ENCODE measurements at regions of chr1 and their contacts with region 1.

Region 1: DNA sequence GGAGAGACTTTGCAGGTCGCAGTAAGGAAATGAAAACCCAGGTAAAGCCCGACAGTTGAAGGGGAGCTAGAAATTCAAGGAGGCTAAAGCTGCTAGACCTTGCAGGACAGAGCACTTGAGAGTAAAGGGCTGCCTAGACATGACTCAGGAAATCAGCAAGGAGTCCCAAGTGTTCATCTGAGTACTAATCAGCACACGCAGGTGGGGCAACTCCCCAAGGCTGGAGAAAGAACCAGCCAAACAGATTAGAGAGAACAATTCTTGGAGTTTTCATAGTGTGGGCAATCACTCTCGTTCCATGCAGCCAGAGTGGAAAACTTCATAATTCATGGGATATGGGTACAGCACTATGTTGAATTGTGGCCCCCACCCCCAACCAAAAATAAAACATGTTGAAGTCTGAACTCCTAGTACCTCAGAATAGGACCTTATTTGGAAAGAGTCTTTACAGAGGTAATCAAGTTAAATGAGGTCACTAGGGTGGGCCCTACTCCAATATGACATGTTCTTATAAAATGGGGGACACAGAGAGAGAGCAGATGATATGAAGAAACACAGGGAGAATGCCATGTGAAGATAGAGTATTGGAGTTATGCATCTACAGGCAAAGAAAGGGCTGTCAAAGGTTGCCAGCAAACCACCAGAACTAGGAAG is 28.0 kb downstream of the SYDE2 start:
- DNase-seq: no peak
- H3K4me3 ChIP-seq: no peak overlapping the region
- H3K27ac ChIP-seq: no peak overlapping the region
- H3K4me1 ChIP-seq: no peaks in the 10 kb centered on the region
- H3K27me3 ChIP-seq: no peaks in the 10 kb centered on the region
- CTCF ChIP-seq: no peak

Region 2: GRCh38 chr1:84985365-84985764 is 187.4 kb before region 1 on chr1:
- CTCF ChIA-PET with region 1: no interaction called
- POLR2A ChIA-PET with region 1: interaction called, 10 read pairs
- intact Hi-C with region 1: no loop called
- DNase-seq: no peak
- H3K4me3 ChIP-seq: no peak overlapping the region
- H3K27ac ChIP-seq: no peak overlapping the region
- H3K4me1 ChIP-seq: no peaks in the 10 kb centered on the region
- H3K27me3 ChIP-seq: no peaks in the 10 kb centered on the region
- CTCF ChIP-seq: no peak

Region 3: DNA sequence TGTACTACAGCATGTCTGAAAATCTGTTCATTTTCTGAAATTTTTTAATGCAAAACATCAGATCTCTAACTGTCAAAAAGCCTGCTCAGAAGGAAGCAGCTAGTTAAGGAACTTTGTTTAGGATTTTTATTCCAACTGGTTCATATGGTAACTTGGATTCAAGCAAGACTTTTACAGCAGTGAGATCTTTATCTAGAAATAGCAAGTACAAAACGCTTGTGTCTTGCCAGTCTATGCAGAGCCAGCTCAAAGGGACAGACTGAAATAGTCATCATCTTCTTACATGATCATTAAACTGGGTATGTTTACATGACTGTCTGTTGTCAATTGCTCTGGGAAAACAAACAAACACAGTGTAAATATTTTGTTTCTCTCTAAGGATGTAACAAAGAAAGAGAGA is 254.5 kb after region 1 on chr1:
- CTCF ChIA-PET with region 1: no interaction called
- POLR2A ChIA-PET with region 1: no interaction called
- intact Hi-C with region 1: no loop called
- DNase-seq: no peak
- H3K4me3 ChIP-seq: no peak overlapping the region
- H3K27ac ChIP-seq: no peak overlapping the region
- H3K4me1 ChIP-seq: no peaks in the 10 kb centered on the region
- H3K27me3 ChIP-seq: no peaks in the 10 kb centered on the region
- CTCF ChIP-seq: no peak

Region 4: GRCh38 chr1:85484264-85484663 is 311.5 kb after region 1 on chr1:
- CTCF ChIA-PET with region 1: no interaction called
- POLR2A ChIA-PET with region 1: no interaction called
- intact Hi-C with region 1: no loop called
- DNase-seq: no peak
- H3K4me3 ChIP-seq: no peak overlapping the region
- H3K27ac ChIP-seq: no peak overlapping the region
- H3K4me1 ChIP-seq: peaks cover 6% of the 10 kb centered on the region; the same call in 1 of the 2 replicates
- H3K27me3 ChIP-seq: no peaks in the 10 kb centered on the region
- CTCF ChIP-seq: no peak